H1 (cell line): ENCODE measurements at regions of chr17 and their contacts with region 1.

Region 1: DNA sequence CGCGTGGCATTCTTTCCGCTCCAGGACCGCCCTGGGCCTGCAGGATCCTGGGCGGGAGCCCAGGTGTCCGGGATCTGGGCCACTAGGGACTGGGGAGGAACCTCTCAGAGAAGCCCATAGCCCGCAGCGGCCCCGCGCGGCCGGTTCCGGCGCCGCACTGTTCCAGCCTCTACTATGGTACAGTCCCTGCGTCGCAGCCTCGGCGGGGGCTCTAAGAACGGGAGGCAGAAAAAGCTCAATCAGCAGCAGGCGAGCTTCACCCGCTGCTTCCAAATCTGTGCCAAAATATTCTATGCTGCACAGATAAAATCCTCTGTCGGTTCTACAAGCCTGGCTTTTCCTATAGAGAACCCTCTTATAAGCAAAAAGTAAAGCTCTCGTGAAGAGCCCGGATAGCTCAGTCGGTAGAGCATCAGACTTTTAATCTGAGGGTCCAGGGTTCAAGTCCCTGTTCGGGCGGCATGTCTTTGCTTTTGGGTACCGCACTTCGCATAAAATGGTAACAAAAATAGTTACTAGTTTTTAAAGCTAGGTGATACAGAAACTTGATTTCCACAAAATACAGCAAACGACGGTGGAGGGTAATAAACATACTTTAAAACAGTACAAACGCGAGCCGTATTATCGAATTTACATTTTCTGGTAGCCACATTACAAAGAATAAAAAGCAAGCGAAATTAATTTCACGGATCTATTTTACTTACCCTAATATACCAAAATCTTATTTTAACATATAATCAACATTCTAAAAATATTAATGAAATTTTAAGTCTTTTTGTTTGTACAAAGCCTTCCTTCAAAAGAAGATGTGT is 661 bp upstream of the ALOXE3 start:
- DNase-seq: peak in 1 of 2 experiments; percentile 96
- H3K4me3 ChIP-seq: peak overlapping the region; percentile 75 to 89 (median 82)
- H3K27ac ChIP-seq: no peak overlapping the region
- H3K4me1 ChIP-seq: peaks cover 0 to 12% (median 6%) of the 10 kb centered on the region in 4 experiments; a peak in 5 of 7 replicates
- H3K27me3 ChIP-seq: peaks cover 27 to 60% (median 52%) of the 10 kb centered on the region in 4 experiments
- CTCF ChIP-seq: peak; percentile 78 to 92 (median 81)
- EP300 ChIP-seq: 0 out of 3 replicates have a peak, but pooled peaks of 1 of the 2 experiments have one; percentile 19
- POLR2A ChIP-seq: no peak
- RAD21 ChIP-seq: peak; percentile 58 to 72

Region 2: DNA sequence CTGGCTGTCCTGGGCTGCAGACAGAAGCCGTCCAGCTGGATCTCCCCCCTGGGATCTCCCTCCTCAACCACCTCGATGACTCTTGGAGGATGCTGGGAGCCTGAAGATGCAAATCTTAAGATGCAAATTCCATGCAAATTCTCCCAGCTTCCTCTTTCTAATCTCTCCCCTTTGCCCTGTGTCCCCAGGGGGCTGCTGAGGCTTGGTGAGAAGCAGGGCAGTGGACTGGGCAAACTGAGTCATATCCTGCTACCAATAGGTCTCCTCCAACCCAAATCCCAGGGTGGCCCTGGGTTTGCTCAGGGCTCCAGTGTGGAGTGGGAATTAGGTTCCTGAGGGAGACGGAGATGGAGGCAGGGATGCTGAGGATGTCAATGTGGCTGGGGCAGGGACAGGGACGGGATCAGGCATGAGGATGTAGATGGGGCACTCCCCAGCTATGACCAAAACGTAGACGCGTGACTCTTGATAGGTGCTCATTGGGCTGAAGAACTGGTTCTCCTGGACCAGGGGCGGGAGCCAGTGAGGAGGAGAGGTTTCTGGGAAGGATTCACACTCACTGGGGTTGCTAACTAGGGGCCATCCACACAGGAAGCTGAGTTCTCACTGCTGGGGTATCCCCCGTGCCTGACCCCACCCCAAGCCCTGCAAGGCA is 27.8 kb before region 1 on chr17:
- CTCF ChIA-PET with region 1: interaction called, 501 read pairs
- POLR2A ChIA-PET with region 1: no interaction called
- DNase-seq: no peak
- H3K4me3 ChIP-seq: no peak overlapping the region
- H3K27ac ChIP-seq: no peak overlapping the region
- H3K4me1 ChIP-seq: peaks cover 0 to 7% (median under 1%) of the 10 kb centered on the region in 4 experiments; a peak in 5 of 7 replicates
- H3K27me3 ChIP-seq: peaks cover 0 to 10% (median 4%) of the 10 kb centered on the region in 4 experiments; a peak in 4 of 7 replicates
- CTCF ChIP-seq: no peak
- EP300 ChIP-seq: no peak
- POLR2A ChIP-seq: no peak
- RAD21 ChIP-seq: no peak

Region 3: GRCh38 chr17:8131844-8132441 is 13.0 kb after region 1 on chr17:
- CTCF ChIA-PET with region 1: interaction called, 15 read pairs
- POLR2A ChIA-PET with region 1: interaction called, 23 read pairs
- DNase-seq: no peak
- H3K4me3 ChIP-seq: no peak overlapping the region
- H3K27ac ChIP-seq: no peak overlapping the region
- H3K4me1 ChIP-seq: peaks cover 0 to 14% (median 8%) of the 10 kb centered on the region in 4 experiments; a peak in 6 of 7 replicates
- H3K27me3 ChIP-seq: peaks cover 0 to 17% (median 14%) of the 10 kb centered on the region in 4 experiments; a peak in 6 of 7 replicates
- CTCF ChIP-seq: no peak
- EP300 ChIP-seq: no peak
- POLR2A ChIP-seq: no peak
- RAD21 ChIP-seq: no peak

Region 4: DNA sequence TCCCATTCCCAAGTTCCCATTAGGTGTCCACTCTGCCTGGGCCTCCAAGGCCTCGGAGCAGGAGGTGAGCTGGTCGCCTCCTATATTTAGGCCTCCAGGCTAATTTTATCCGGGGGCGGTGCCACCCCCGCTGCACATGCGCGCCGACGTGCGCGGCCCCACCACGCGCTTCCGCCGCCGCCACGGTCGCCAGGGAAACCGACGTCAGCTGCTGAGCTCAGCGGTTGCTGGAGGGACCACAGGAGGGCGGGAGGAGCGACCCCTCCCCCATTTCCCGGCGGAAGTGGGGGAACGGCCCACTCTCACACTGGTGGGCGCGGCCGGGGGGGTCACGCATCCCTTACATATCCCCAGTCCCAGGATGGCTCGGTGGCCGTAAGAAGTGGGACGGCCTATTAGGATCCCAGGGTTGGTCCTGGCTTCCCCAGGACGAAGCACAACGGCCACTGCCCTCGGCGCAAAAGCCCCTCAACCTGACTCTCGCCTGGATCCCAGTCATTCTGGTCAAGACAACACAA is 32.2 kb after region 1 on chr17:
- CTCF ChIA-PET with region 1: interaction called, 54 read pairs
- POLR2A ChIA-PET with region 1: interaction called, 49 read pairs
- DNase-seq: peak in 1 of 2 experiments; percentile 81
- H3K4me3 ChIP-seq: peak overlapping the region; percentile 79 to 93 (median 84)
- H3K27ac ChIP-seq: no peak overlapping the region
- H3K4me1 ChIP-seq: peaks cover 12 to 31% (median 19%) of the 10 kb centered on the region in 4 experiments
- H3K27me3 ChIP-seq: no peaks in the 10 kb centered on the region
- CTCF ChIP-seq: no peak
- EP300 ChIP-seq: no peak
- POLR2A ChIP-seq: no peak
- RAD21 ChIP-seq: no peak